CD4-positive, alpha-beta T cell (primary cell): ENCODE measurements at regions of chr1 and their contacts with region 1.

Region 1: DNA sequence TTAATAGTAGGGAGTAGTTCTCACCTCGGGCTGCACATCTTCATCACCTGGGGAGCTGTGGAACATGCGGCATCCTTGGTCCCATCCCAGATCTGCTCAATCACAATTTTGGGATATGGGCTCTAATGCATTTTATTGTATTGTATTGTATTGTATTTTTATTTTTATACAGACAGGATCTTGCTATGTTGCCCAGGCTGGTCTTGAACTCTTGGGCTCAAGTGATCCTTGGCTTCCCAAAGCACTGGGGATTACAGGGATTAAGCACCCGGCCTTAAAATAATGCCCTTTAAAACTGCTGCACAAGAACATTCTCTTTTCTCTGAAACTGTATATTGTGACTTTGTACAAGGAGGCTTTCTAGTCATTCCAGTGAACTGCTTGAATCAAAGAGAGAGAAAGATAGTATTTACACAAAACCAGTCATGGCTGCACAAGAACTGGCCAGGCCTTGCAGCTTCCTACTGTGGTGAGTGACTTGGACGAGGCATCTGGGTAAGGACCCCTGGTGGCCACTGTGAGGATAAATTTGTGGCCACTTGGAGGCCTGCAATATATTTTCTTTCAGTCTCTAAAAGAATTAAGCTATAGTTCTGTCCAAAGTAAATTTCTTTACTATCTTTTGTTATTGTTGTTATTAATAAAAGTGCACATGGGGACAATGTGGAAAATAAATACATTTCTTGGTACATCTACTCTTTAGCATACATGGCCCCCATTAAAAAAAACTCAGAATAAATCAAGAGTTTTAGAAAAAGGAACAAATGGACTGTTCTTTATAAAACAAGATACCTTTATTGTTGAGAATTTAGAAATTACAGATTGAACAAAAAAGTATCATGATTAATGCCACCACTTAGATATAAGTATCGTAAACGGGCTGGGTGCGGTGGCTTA is 48.0 kb downstream of the TBCE start:
- DNase-seq: peak; percentile 39 to 78 (median 51)
- ATAC-seq: peak; percentile 88
- H3K4me3 ChIP-seq: no peak overlapping the region
- H3K4me3 Mint-ChIP-seq: no peak overlapping the region
- H3K27ac ChIP-seq: no peak overlapping the region
- H3K27ac Mint-ChIP-seq: no peak overlapping the region
- H3K4me1 ChIP-seq: no peaks in the 10 kb centered on the region
- H3K4me1 Mint-ChIP-seq: peaks cover 10% of the 10 kb centered on the region
- H3K27me3 ChIP-seq: no peaks in the 10 kb centered on the region
- H3K27me3 Mint-ChIP-seq: no peaks in the 10 kb centered on the region
- CTCF ChIP-seq: peak; percentile 84

Region 2: DNA sequence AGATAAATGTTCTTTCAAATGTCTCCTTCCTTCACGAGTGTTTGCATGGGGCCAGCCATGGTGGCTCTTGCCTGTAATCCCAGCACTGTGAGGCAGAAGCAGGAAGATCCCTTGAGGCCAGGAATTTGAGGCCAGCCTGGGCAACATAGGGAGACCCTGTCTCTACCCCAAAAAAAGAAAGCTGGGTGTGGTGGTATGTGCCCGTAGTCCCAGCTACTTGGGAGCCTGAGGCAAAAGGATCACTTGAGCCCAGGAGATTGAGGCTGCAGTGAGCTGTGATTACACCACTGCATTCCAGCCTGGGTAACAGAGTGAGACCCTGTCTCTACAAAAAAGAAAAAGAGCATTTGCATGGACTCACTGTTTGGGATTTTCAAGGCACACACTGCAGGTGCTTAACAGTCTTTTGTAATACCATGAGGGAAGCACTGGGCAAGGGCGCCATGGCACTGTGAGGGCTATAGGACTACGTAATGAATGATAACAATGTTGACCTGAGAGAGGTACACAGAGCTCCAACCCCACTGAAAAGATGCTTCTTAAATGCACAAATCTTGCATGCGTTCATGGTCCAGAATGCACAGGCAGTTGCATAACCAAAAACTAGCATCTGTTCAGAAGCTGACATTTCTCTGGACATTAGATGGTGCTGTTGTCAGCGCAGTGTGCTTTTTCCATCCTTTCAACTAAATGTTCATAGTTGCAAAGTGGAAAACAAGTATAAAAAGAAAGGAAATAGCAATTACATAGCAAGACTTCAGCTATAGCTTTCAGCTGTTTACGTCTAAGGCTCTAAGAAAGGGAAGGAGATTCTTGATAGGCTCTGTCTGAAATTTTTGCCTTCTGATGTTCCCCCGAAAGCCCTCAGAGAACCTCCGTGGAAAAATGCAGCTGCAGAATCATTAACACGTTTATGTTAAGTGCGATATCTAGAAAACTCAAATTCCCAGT is 928.5 kb before region 1 on chr1:
- CTCF ChIA-PET with region 1: no interaction called
- POLR2A ChIA-PET with region 1: no interaction called
- intact Hi-C with region 1: loop called in 1 of 2 experiments (anchors 5 kb)
- DNase-seq: peak in 6 of 14 experiments; percentile 6 to 64 (median 33)
- ATAC-seq: peak; percentile 81
- H3K4me3 ChIP-seq: no peak overlapping the region
- H3K4me3 Mint-ChIP-seq: peak overlapping the region; percentile 17
- H3K27ac ChIP-seq: no peak overlapping the region
- H3K27ac Mint-ChIP-seq: peak overlapping the region; percentile 31
- H3K4me1 ChIP-seq: peaks cover 11% of the 10 kb centered on the region
- H3K4me1 Mint-ChIP-seq: peaks cover 41% of the 10 kb centered on the region
- H3K27me3 ChIP-seq: no peaks in the 10 kb centered on the region
- H3K27me3 Mint-ChIP-seq: no peaks in the 10 kb centered on the region
- CTCF ChIP-seq: peak; percentile 50

Region 3: GRCh38 chr1:235093696-235094592 is 321.3 kb before region 1 on chr1:
- CTCF ChIA-PET with region 1: interaction called, 3 read pairs
- POLR2A ChIA-PET with region 1: no interaction called
- intact Hi-C with region 1: loop called (anchors 2 kb)
- DNase-seq: peak; percentile 75 to 90 (median 82)
- ATAC-seq: peak; percentile 100
- H3K4me3 ChIP-seq: no peak overlapping the region
- H3K4me3 Mint-ChIP-seq: no peak overlapping the region
- H3K27ac ChIP-seq: no peak overlapping the region
- H3K27ac Mint-ChIP-seq: no peak overlapping the region
- H3K4me1 ChIP-seq: peaks cover 9% of the 10 kb centered on the region
- H3K4me1 Mint-ChIP-seq: peaks cover 6% of the 10 kb centered on the region
- H3K27me3 ChIP-seq: no peaks in the 10 kb centered on the region
- H3K27me3 Mint-ChIP-seq: peaks cover 6% of the 10 kb centered on the region
- CTCF ChIP-seq: peak; percentile 94

Region 4: GRCh38 chr1:235253219-235253962 is 161.9 kb before region 1 on chr1:
- CTCF ChIA-PET with region 1: interaction called, 40 read pairs
- POLR2A ChIA-PET with region 1: interaction called, 4 read pairs
- intact Hi-C with region 1: loop called (anchors 1 kb)
- DNase-seq: peak; percentile 41 to 83 (median 51)
- ATAC-seq: peak; percentile 97
- H3K4me3 ChIP-seq: no peak overlapping the region
- H3K4me3 Mint-ChIP-seq: no peak overlapping the region
- H3K27ac ChIP-seq: no peak overlapping the region
- H3K27ac Mint-ChIP-seq: peak overlapping the region; percentile 38
- H3K4me1 ChIP-seq: peaks cover 4% of the 10 kb centered on the region
- H3K4me1 Mint-ChIP-seq: peaks cover 47% of the 10 kb centered on the region
- H3K27me3 ChIP-seq: no peaks in the 10 kb centered on the region
- H3K27me3 Mint-ChIP-seq: no peaks in the 10 kb centered on the region
- CTCF ChIP-seq: peak; percentile 97

Region 5: DNA sequence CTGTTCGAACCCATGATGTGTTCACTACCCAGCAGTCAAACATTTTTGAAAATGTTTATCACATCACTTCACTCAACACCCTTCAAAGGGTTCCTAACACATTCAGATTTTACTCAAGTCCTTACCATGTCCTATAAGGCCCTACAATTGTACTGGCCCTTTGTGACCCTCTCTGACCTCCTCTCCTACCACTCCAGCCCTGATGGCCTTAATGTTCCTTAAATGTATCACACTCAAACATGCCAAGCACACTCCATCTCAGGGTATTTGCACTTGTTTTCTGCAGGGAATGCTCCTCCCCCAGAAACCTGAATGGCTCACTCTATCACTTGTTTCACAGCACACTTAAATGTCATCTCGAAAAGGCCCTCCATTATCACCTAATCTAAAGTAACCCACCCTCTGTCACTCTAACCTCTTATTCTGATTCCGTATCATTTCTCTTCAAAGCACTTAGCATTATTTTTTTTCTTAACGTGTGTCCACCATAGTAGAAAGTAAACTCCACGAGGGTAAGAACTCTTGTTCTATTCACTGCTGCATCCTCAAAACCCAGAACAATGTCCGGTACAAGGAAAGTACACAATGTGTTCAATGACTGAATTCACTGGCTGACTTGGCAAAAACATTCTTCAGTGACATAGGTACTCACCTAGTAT is 94.6 kb before region 1 on chr1:
- CTCF ChIA-PET with region 1: interaction called, 3 read pairs
- POLR2A ChIA-PET with region 1: no interaction called
- intact Hi-C with region 1: loop called in 1 of 2 experiments (anchors 5 kb)
- DNase-seq: no peak
- ATAC-seq: no peak
- H3K4me3 ChIP-seq: no peak overlapping the region
- H3K4me3 Mint-ChIP-seq: peak overlapping the region; percentile 8
- H3K27ac ChIP-seq: no peak overlapping the region
- H3K27ac Mint-ChIP-seq: peak overlapping the region; percentile 2
- H3K4me1 ChIP-seq: peaks cover 60% of the 10 kb centered on the region
- H3K4me1 Mint-ChIP-seq: peaks cover 68% of the 10 kb centered on the region
- H3K27me3 ChIP-seq: no peaks in the 10 kb centered on the region
- H3K27me3 Mint-ChIP-seq: no peaks in the 10 kb centered on the region
- CTCF ChIP-seq: no peak

Region 6: DNA sequence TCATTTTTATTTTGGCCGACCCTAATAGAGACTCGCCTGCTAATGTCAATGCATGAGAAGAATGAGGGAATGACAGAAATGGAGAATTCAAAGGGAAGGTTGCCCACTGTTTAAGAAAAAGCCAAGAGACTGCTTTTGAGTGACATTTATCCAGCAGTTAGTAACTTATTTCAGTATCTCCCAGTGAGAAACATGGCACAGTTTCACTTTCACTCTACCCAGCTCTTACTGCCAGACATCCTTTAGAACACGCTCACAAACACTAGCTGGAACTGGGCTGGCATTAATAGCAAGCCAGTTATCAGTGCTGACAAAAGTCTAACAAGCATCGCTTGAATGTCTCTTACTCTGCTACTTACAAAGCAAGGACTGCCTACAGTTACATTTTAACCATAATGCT is 78.4 kb before region 1 on chr1:
- CTCF ChIA-PET with region 1: interaction called, 9 read pairs
- POLR2A ChIA-PET with region 1: no interaction called
- intact Hi-C with region 1: loop called in 1 of 2 experiments (anchors 5 kb)
- DNase-seq: peak in 8 of 14 experiments; percentile 3 to 79 (median 20)
- ATAC-seq: peak; percentile 96
- H3K4me3 ChIP-seq: peak overlapping the region; percentile 0
- H3K4me3 Mint-ChIP-seq: peak overlapping the region; percentile 69
- H3K27ac ChIP-seq: peak overlapping the region; percentile 6 to 36
- H3K27ac Mint-ChIP-seq: peak overlapping the region; percentile 74
- H3K4me1 ChIP-seq: peaks cover 10% of the 10 kb centered on the region
- H3K4me1 Mint-ChIP-seq: peaks cover 25% of the 10 kb centered on the region
- H3K27me3 ChIP-seq: no peaks in the 10 kb centered on the region
- H3K27me3 Mint-ChIP-seq: no peaks in the 10 kb centered on the region
- CTCF ChIP-seq: no peak